PC-3 (cell line): ENCODE measurements at regions of chr12 and their contacts with region 1.

Region 1: GRCh38 chr12:123580772-123581171 is 3.6 kb upstream of the TMED2 start:
- DNase-seq: peak; percentile 31
- ATAC-seq: peak; percentile 21
- H3K4me3 ChIP-seq: no peak overlapping the region
- H3K27ac ChIP-seq: no peak overlapping the region
- H3K4me1 ChIP-seq: peaks cover 16% of the 10 kb centered on the region
- H3K27me3 ChIP-seq: no peaks in the 10 kb centered on the region
- CTCF ChIP-seq: no peak

Region 2: GRCh38 chr12:123365025-123365917 is 215.5 kb before region 1 on chr12:
- CTCF ChIA-PET with region 1: interaction called, 3 read pairs
- POLR2A ChIA-PET with region 1: no interaction called
- intact Hi-C with region 1: loop called (anchors 5 kb)
- DNase-seq: peak; percentile 99
- ATAC-seq: peak; percentile 77
- H3K4me3 ChIP-seq: peak overlapping the region; percentile 78
- H3K27ac ChIP-seq: peak overlapping the region; percentile 83
- H3K4me1 ChIP-seq: peaks cover 8% of the 10 kb centered on the region
- H3K27me3 ChIP-seq: no peaks in the 10 kb centered on the region
- CTCF ChIP-seq: peak; percentile 89

Region 3: GRCh38 chr12:123384318-123384993 is 196.3 kb before region 1 on chr12:
- CTCF ChIA-PET with region 1: interaction called, 5 read pairs
- POLR2A ChIA-PET with region 1: no interaction called
- intact Hi-C with region 1: loop called (anchors 5 kb)
- DNase-seq: peak; percentile 11
- ATAC-seq: peak; percentile 4
- H3K4me3 ChIP-seq: peak overlapping the region; percentile 93
- H3K27ac ChIP-seq: no peak overlapping the region; the same call in 1 of the 2 replicates
- H3K4me1 ChIP-seq: peaks cover 18% of the 10 kb centered on the region
- H3K27me3 ChIP-seq: no peaks in the 10 kb centered on the region
- CTCF ChIP-seq: no peak; the same call in 1 of the 2 replicates

Region 4: DNA sequence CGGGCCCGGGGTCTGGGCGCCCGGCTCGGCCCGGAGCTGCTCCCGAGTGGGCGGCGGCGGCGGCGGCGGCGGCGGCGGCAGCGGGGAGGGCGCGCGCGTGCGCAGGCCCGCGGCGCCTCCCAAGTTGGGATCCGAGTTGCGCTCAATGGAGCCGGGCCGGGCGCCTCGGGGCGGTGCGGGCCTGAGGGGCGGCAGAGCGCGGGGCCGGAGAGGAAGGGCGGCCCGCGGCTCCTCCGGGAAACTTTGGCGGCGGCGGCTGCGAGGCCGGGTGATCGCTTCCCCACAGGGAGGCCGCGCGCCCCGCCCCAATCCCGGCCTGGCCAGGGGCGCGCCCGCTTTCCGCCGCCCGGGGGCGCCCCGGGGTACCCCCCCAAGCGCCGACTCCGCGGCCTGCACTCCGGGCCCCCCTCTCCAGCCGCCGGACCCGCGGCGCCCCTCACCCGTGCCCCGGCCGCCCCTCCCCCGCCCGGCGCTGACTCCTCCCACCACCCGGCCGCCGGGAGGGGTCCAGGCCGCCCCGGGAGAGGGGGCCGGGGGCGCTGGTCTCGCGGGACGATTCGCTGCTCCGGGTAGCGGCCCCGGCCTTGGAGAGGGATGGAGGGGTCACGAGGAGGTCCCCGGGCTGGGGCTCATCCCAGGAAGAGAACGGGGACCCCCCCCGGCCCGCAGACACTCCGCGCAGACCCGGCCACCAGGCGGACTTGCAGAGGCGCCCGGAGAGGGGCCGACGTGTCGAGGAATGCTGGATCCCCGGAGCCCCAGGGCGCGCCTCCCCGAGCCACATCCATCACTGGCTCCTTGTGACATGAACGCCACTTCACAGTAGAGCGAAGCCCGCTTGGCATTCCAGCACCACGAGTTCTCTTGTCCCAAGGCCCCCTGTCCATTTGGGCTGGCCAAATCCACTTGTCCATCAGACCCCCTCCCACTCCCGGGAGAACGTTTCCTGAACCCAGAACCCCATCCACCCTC is 46.8 kb before region 1 on chr12 and contains the start of gene RILPL1:
- CTCF ChIA-PET with region 1: no interaction called
- POLR2A ChIA-PET with region 1: no interaction called
- intact Hi-C with region 1: loop called (anchors 2 kb)
- DNase-seq: peak; percentile 39
- ATAC-seq: peak; percentile 61
- H3K4me3 ChIP-seq: peak within 1 kb of the TSS; percentile 97
- H3K27ac ChIP-seq: no peak within 1 kb of the TSS
- H3K4me1 ChIP-seq: peaks cover 12% of the 10 kb centered on the region; the same call in 1 of the 2 replicates
- H3K27me3 ChIP-seq: no peaks in the 10 kb centered on the region
- CTCF ChIP-seq: no peak; the same call in 1 of the 2 replicates
- total RNA-seq, gene RILPL1: 14.7 and 18.8 TPM in 2 replicates

Region 5: DNA sequence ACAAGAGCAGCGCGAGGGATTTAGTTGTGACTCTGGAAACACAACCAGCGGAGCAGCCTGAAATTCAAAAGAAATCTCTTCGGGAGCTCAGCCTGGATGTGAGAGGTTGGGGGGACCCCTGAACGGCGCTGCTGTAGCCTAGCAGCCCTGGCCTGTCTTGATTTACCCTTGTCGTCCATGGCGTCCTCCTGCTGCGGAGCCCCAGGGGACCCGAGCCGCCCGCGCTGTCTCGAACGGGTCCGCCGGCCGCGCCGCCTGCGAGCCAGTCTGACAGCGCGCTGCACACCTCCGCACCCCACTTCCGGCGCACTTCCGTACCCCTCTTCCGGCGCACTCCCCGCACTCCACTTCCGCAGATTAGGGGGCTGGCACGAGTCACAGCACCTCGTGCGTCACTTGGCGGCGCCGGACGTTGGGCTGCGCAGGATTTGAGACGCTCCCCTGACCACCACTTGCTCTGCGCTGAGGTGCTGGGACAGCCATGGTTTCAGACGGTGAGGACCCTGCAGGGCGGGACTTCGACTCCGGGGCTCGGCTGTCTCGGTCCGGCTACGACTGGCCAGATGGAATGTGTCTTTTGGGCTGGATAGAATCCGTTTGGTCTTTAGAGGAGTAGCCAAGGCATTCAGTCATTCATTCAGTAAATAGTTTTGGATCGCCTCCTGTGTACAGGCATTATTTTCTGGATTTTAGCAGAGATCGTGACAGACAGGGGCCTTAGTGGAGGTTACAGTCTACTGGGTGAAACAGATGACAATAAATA is 52.8 kb after region 1 on chr12 and contains the starts of genes EIF2B1 and GTF2H3:
- CTCF ChIA-PET with region 1: no interaction called
- POLR2A ChIA-PET with region 1: no interaction called
- intact Hi-C with region 1: loop called (anchors 1 kb)
- DNase-seq: peak; percentile 96
- ATAC-seq: peak; percentile 98
- H3K4me3 ChIP-seq: peak within 1 kb of the TSS; percentile 94
- H3K27ac ChIP-seq: peak within 1 kb of the TSS; percentile 64
- H3K4me1 ChIP-seq: peaks cover 12% of the 10 kb centered on the region
- H3K27me3 ChIP-seq: no peaks in the 10 kb centered on the region
- CTCF ChIP-seq: no peak
- total RNA-seq, gene EIF2B1: 70.8 and 83.4 TPM in 2 replicates
- total RNA-seq, gene GTF2H3: 24.2 and 37.6 TPM in 2 replicates